CD4-positive, alpha-beta T cell (primary cell): ENCODE measurements at regions of chr1 and their contacts with region 1.

Region 1: DNA sequence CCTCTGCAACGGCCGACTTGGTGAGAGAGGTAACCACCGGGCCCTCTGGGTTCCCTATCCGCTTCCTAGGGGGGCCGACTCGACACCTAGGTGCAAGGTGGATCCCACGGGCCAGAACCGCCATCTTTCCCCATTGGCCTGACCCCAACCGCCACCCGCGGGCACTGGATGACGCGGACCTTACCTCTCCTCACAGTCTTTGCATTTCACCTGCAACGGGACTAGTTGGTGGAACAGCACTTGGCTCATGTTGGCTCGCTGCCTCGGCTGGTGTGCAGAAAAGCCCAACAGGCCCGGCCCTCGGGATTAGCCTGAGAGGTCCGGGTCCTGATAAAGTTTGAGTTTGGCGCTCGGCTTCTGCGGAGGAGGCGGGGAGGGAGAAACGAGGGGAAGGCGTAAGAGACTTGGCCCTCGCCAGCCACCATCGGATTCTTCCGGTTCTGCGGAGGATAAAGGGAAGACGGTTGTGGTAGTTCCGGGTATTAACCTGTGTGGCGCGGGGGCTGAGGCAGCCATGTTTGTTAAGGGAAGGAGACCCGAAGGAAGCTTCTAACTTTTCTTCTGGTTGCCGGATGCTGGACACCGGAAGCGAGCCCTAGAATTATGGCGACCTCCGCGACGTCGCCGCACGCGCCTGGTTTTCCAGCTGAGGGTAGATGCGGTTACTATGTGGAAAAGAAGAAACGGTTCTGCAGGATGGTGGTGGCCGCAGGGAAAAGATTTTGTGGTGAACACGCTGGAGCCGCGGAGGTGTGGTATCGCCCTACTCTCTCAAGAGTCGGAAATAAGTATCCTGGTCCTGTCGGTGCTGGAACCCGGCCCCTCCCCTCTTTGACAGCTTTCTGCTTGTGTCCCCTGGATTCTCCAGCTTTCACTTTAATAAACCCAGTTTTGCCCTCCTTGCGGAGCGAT is at the starts of genes SASS6 and TRMT13:
- DNase-seq: peak; percentile 83 to 97 (median 90)
- ATAC-seq: peak; percentile 97
- H3K4me3 ChIP-seq: peak within 1 kb of the TSS; percentile 77
- H3K4me3 Mint-ChIP-seq: peak within 1 kb of the TSS; percentile 89
- H3K27ac ChIP-seq: peak within 1 kb of the TSS; percentile 42 to 43
- H3K27ac Mint-ChIP-seq: peak within 1 kb of the TSS; percentile 92
- H3K4me1 ChIP-seq: peaks cover 12% of the 10 kb centered on the region
- H3K4me1 Mint-ChIP-seq: peaks cover 43% of the 10 kb centered on the region
- H3K27me3 ChIP-seq: no peaks in the 10 kb centered on the region
- H3K27me3 Mint-ChIP-seq: no peaks in the 10 kb centered on the region
- CTCF ChIP-seq: no peak
- total RNA-seq, gene SASS6: 1.7 to 1.8 TPM
- total RNA-seq, gene TRMT13: 6.3 to 6.9 TPM

Region 2: DNA sequence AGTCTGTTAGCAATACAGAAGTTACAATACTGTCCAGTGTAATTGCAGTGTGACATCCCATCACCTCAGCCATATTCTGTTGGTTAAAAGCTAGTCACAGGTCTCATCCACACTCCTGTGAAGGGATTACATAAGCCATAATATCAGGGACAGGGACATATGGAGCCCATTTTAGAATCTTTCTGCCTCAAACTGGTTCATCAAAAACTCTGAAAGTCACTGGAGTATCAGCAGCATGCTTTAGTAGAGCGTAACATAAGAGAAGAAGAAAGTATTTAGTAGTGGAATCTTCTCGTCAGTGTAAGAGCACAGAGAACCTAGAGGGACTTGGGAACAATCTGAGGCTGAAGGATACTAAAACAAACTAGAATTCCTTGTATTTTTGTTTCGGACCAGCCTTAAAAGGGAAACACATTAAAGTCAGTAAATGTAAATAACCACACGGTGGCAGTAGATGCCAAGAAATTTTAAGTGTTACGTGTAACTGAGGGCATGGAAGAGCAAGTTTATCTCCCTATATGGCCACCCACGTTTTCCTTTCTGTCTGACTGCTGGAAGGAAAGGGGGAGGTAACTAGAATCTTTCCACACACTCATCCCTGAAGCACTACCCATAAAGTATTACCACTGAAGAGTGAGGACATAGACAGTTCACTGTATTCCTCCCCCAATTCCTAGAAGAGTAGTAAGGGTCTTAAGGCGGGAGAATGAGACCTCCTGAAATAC is 324.3 kb before region 1 on chr1:
- CTCF ChIA-PET with region 1: no interaction called
- POLR2A ChIA-PET with region 1: no interaction called
- intact Hi-C with region 1: loop called in 1 of 2 experiments (anchors 10 kb)
- DNase-seq: peak in 6 of 14 experiments; percentile 3 to 80 (median 52)
- ATAC-seq: peak; percentile 86
- H3K4me3 ChIP-seq: no peak overlapping the region
- H3K4me3 Mint-ChIP-seq: no peak overlapping the region
- H3K27ac ChIP-seq: no peak overlapping the region
- H3K27ac Mint-ChIP-seq: no peak overlapping the region
- H3K4me1 ChIP-seq: no peaks in the 10 kb centered on the region
- H3K4me1 Mint-ChIP-seq: peaks cover 7% of the 10 kb centered on the region
- H3K27me3 ChIP-seq: peaks cover 5 to 21% of the 10 kb centered on the region in 2 experiments
- H3K27me3 Mint-ChIP-seq: peaks cover 14% of the 10 kb centered on the region
- CTCF ChIP-seq: peak; percentile 86

Region 3: GRCh38 chr1:99969729-99970621 is 162.8 kb before region 1 on chr1 and contains the start of gene SLC35A3:
- CTCF ChIA-PET with region 1: no interaction called
- POLR2A ChIA-PET with region 1: interaction called, 24 read pairs
- intact Hi-C with region 1: loop called in 1 of 2 experiments (anchors 5 kb)
- DNase-seq: peak; percentile 60 to 88 (median 72)
- ATAC-seq: peak; percentile 83
- H3K4me3 ChIP-seq: peak within 1 kb of the TSS; percentile 80
- H3K4me3 Mint-ChIP-seq: peak within 1 kb of the TSS; percentile 100
- H3K27ac ChIP-seq: peak within 1 kb of the TSS; percentile 24 to 71
- H3K27ac Mint-ChIP-seq: peak within 1 kb of the TSS; percentile 97
- H3K4me1 ChIP-seq: peaks cover 11% of the 10 kb centered on the region
- H3K4me1 Mint-ChIP-seq: peaks cover 38% of the 10 kb centered on the region
- H3K27me3 ChIP-seq: no peaks in the 10 kb centered on the region
- H3K27me3 Mint-ChIP-seq: no peaks in the 10 kb centered on the region
- CTCF ChIP-seq: no peak
- total RNA-seq, gene SLC35A3: 20.2 to 24.6 TPM

Region 4: DNA sequence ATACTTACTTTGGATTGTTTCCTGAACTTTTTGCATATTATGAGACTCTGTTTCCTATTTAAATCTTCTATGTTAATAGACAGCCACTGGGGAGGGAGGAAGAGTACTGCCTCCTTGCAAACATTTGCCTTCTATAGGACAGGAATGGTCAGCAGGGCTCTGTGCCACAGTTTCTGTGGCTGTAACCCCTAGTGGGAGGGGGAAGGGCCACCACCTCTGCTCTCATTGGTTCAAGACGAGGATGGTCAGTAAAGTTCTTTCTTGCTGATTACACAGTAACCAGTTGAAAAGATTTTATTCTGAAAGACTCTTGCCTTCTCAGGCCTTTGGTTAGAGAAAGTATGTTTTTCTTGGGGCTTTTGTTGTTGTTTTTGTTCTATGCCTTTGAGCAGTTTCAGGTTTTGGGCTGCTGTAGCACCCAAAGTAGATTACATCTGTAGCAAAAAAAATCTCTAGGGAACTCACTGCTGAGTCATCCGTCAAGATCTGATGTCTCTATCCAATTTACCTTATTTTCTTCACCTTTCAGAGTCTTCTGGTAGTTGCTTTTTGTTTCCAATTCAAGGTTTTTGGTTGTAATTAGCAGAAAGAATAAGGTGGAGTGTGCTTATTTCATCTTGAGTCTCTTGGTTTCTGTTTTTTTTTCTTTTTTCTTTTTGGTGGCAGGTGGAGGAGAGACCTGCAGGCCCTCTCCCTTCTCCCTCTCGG is 139.9 kb before region 1 on chr1:
- CTCF ChIA-PET with region 1: no interaction called
- POLR2A ChIA-PET with region 1: no interaction called
- intact Hi-C with region 1: no loop called
- DNase-seq: no peak
- ATAC-seq: no peak
- H3K4me3 ChIP-seq: no peak overlapping the region
- H3K4me3 Mint-ChIP-seq: no peak overlapping the region
- H3K27ac ChIP-seq: no peak overlapping the region
- H3K27ac Mint-ChIP-seq: no peak overlapping the region
- H3K4me1 ChIP-seq: no peaks in the 10 kb centered on the region
- H3K4me1 Mint-ChIP-seq: no peaks in the 10 kb centered on the region
- H3K27me3 ChIP-seq: no peaks in the 10 kb centered on the region
- H3K27me3 Mint-ChIP-seq: no peaks in the 10 kb centered on the region
- CTCF ChIP-seq: no peak

Region 5: DNA sequence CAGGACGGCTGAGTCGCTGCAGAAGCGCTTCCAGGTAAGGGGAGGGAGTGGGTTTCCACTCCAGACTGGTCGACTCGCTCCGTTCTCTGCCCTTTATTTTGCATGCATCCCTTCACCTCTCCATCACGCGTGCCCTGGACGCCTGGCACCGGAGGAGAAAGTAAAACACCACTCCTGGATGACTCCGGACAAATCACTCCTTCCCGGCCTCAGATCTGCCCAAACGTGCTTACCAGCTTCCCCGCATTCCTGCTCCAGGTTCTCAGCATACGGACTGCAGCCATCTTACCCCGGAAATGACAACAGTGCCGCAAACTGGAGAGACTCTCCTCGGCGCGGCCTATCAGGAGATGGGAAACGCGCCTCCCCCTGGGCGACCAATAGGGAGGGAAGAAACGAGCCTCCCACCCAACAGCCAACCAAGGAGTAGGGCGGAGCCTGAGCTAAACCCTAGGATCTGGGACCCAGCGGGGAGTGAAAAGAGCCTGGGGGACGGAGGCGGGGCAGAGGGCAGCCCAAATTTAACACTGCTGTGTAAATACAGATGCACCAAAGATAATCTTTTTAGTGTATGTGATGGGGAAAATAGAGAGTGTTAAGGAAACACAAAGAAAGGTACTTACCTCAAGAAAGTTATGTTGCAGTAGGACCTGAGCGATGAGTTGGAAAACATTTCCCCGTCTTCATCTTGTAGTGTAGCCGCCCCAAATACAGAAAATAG is 116.9 kb after region 1 on chr1 and contains the start of gene DBT:
- CTCF ChIA-PET with region 1: no interaction called
- POLR2A ChIA-PET with region 1: interaction called, 19 read pairs
- intact Hi-C with region 1: loop called (anchors 1 to 5 kb)
- DNase-seq: peak; percentile 82 to 95 (median 86)
- ATAC-seq: peak; percentile 99
- H3K4me3 ChIP-seq: peak within 1 kb of the TSS; percentile 88
- H3K4me3 Mint-ChIP-seq: no peak within 1 kb of the TSS
- H3K27ac ChIP-seq: peak within 1 kb of the TSS; percentile 51 to 69
- H3K27ac Mint-ChIP-seq: no peak within 1 kb of the TSS
- H3K4me1 ChIP-seq: peaks cover 11% of the 10 kb centered on the region
- H3K4me1 Mint-ChIP-seq: peaks cover 15% of the 10 kb centered on the region
- H3K27me3 ChIP-seq: no peaks in the 10 kb centered on the region
- H3K27me3 Mint-ChIP-seq: no peaks in the 10 kb centered on the region
- CTCF ChIP-seq: no peak
- total RNA-seq, gene DBT: 5.3 to 5.4 TPM

Region 6: DNA sequence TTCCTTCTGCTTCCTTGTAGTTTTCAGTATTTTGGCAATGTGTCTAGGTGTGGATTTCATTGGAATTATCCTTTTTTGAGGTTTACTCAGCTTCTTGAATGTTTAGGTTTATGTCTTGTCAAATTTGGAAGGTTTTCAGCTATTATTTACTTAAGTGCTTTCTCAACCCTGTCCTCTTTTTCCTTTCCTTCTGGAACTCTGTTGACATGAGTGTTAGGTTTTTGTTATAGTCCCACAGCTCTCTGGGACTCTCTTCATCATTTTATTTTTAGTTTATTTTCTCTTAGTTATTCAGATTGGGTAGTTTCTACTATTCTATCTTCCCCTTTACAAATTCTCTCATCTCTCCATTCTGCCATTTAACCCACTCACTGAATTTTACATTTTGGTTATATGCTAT is 342.0 kb after region 1 on chr1:
- CTCF ChIA-PET with region 1: no interaction called
- POLR2A ChIA-PET with region 1: interaction called, 3 read pairs
- intact Hi-C with region 1: loop called in 1 of 2 experiments (anchors 5 kb)
- DNase-seq: no peak
- ATAC-seq: no peak
- H3K4me3 ChIP-seq: no peak overlapping the region
- H3K4me3 Mint-ChIP-seq: no peak overlapping the region
- H3K27ac ChIP-seq: no peak overlapping the region
- H3K27ac Mint-ChIP-seq: peak overlapping the region; percentile 24
- H3K4me1 ChIP-seq: peaks cover 5% of the 10 kb centered on the region
- H3K4me1 Mint-ChIP-seq: peaks cover 54% of the 10 kb centered on the region
- H3K27me3 ChIP-seq: no peaks in the 10 kb centered on the region
- H3K27me3 Mint-ChIP-seq: no peaks in the 10 kb centered on the region
- CTCF ChIP-seq: no peak

Region 7: GRCh38 chr1:100736746-100737145 is 603.9 kb after region 1 on chr1:
- CTCF ChIA-PET with region 1: no interaction called
- POLR2A ChIA-PET with region 1: no interaction called
- intact Hi-C with region 1: no loop called
- DNase-seq: no peak
- ATAC-seq: no peak
- H3K4me3 ChIP-seq: no peak overlapping the region
- H3K4me3 Mint-ChIP-seq: no peak overlapping the region
- H3K27ac ChIP-seq: no peak overlapping the region
- H3K27ac Mint-ChIP-seq: no peak overlapping the region
- H3K4me1 ChIP-seq: no peaks in the 10 kb centered on the region
- H3K4me1 Mint-ChIP-seq: no peaks in the 10 kb centered on the region
- H3K27me3 ChIP-seq: no peaks in the 10 kb centered on the region
- H3K27me3 Mint-ChIP-seq: no peaks in the 10 kb centered on the region
- CTCF ChIP-seq: no peak